GM10248 (cell line): ENCODE measurements at regions of chr6 and their contacts with region 1.

Region 1: DNA sequence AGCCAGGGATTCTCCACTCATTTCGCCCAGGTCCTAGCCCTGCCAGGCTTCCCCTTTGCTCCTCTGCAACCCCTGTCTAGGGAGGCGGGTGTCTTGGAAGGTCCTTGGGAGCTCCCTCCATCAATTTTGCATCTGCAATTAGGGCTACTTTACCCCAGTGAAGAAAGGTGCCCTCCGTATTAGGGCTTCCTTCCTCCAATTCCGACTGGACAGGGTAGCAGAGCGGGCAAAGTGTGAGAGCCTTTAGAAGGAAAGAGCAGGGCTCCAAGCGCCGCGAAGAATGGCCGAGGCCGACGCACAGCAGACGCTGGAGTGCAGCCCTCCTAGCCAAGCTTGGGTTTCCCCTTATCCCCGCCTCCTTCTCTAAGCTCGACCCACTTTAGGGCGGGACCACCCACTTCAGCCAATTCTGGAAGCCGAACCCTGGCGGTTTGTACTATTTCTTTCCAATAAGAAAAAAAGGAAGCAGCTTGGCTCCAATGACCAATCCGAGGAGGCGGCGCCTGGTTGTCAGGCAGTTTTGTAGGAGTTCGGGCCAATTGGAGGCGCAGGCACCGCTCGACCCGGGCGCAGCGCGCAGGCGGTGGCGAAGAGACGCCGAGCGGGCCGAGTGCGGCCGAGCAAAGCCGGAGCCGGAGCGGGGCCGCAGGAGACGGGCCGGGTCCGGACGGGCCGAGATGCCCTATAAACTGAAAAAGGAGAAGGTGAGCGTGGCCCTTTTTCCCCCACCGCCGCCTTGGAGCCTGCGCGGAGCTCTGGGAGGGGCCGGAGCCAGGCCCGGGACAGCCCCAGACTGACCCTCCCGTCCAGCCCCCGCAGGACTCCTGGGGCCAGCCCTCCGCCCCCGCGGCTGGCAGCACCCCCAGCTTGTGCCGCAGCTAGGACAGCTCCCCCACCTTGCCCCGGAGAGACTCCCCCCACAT is at the start of gene PPP2R5D:
- DNase-seq: peak; percentile 97
- CTCF ChIP-seq: no peak

Region 2: GRCh38 chr6:42928986-42929820 is 55.1 kb before region 1 on chr6 and contains the start of gene CNPY3:
- CTCF ChIA-PET with region 1: interaction called, 5 read pairs
- POLR2A ChIA-PET with region 1: interaction called, 11 read pairs
- DNase-seq: peak; percentile 90
- CTCF ChIP-seq: no peak

Region 3: DNA sequence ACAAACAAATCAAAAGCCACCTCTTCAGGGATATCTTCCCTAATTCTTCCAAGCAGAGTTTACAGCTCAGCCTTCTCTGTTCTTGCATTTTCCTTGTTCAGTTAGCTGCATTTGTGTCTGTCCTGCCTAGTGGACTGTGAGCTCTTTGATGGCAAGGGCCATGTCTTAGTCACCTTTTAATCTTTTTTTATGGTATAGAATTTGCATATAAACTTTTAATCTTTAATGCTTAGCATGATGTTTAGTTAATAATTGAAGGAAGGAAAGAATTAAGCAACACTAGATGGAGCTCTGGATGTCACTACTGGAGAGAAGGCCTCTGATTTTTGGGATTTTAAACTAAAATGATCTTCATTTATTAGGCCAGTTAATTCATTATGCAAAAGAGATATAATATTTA is 12.3 kb after region 1 on chr6:
- CTCF ChIA-PET with region 1: interaction called, 6 read pairs
- POLR2A ChIA-PET with region 1: interaction called, 11 read pairs
- DNase-seq: no peak
- CTCF ChIP-seq: no peak